Heart left ventricle (tissue), 16 donors: ENCODE measurements at regions of chr1 and their contacts with region 1.

Region 1: DNA sequence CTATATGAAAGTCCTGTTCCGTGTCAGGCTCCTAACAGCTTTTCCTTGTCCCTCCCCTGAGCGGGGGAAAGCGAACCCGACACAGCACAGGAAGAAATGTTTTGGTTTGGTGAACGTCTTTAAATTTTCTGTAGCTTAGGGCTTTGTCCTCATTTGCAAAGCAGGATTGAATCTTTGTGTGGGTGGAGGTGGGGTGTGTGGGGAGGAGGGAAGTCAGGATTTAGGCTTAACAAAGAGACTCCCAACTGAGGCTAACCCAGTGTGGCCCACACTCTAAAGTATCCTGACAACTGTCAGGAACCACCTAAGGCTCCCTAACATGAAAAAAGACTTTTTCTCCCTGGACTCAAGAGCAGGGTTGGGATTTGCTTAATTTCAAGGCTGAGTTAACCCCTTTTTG is 376.2 kb upstream of the C1orf174 start:
- DNase-seq: no peak
- ATAC-seq: no peak
- H3K4me3 ChIP-seq: no peak overlapping the region
- H3K27ac ChIP-seq: no peak overlapping the region
- H3K4me1 ChIP-seq: no peaks in the 10 kb centered on the region
- H3K27me3 ChIP-seq: peaks cover 0 to 30% (median 6%) of the 10 kb centered on the region in 9 donors
- CTCF ChIP-seq: no peak
- POLR2A ChIP-seq: no peak

Region 2: GRCh38 chr1:4684136-4684535 is 407.9 kb after region 1 on chr1:
- intact Hi-C with region 1: no loop called
- DNase-seq: peak in 1 of 5 donors; percentile 7
- ATAC-seq: no peak
- H3K4me3 ChIP-seq: no peak overlapping the region
- H3K27ac ChIP-seq: no peak overlapping the region
- H3K4me1 ChIP-seq: no peaks in the 10 kb centered on the region
- H3K27me3 ChIP-seq: peaks cover 0 to 35% (median 2%) of the 10 kb centered on the region in 9 donors
- CTCF ChIP-seq: no peak
- POLR2A ChIP-seq: no peak

Region 3: DNA sequence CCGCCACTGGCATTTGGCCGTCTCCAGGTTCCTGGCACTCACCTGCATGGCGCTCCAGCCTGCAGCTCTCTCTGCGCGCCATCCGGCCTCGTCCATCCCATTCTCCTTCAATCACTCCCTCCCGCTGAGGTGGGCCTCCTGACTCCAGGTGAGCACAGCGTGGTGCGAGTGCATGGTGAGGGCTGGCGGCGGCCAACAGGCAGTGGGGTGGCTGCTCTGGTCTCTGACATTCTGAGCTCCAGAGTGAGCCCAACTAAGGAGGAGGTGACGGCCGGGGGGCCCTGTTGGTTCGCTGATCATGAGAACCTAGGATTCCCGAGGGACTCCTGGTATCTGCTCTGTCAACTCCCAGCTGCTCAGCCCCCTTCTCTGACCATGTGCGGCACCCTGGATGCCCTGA is 508.5 kb after region 1 on chr1:
- intact Hi-C with region 1: loop called in 1 of 10 experiments (anchors 5 kb)
- DNase-seq: no peak
- ATAC-seq: no peak
- H3K4me3 ChIP-seq: no peak overlapping the region
- H3K27ac ChIP-seq: no peak overlapping the region
- H3K4me1 ChIP-seq: no peaks in the 10 kb centered on the region
- H3K27me3 ChIP-seq: peaks cover 0 to 36% (median 0%) of the 10 kb centered on the region in 9 donors
- CTCF ChIP-seq: no peak
- POLR2A ChIP-seq: no peak